ENCODE measurements at regions of chr11 and their contacts with region 1.

Region 1: GRCh38 chr11:47248664-47249377 is at the start of gene ACP2:
- DNase-seq: peak; percentile 93 to 95
- ATAC-seq: peak; percentile 95
- H3K4me3 ChIP-seq: peak within 1 kb of the TSS; percentile 51 to 73
- H3K27ac ChIP-seq: peak within 1 kb of the TSS in 1 of 2 donors; percentile 60
- H3K4me1 ChIP-seq: no peaks in the 10 kb centered on the region
- H3K27me3 ChIP-seq: no peaks in the 10 kb centered on the region
- total RNA-seq, gene ACP2: 20.6 to 27.8 TPM

Region 2: DNA sequence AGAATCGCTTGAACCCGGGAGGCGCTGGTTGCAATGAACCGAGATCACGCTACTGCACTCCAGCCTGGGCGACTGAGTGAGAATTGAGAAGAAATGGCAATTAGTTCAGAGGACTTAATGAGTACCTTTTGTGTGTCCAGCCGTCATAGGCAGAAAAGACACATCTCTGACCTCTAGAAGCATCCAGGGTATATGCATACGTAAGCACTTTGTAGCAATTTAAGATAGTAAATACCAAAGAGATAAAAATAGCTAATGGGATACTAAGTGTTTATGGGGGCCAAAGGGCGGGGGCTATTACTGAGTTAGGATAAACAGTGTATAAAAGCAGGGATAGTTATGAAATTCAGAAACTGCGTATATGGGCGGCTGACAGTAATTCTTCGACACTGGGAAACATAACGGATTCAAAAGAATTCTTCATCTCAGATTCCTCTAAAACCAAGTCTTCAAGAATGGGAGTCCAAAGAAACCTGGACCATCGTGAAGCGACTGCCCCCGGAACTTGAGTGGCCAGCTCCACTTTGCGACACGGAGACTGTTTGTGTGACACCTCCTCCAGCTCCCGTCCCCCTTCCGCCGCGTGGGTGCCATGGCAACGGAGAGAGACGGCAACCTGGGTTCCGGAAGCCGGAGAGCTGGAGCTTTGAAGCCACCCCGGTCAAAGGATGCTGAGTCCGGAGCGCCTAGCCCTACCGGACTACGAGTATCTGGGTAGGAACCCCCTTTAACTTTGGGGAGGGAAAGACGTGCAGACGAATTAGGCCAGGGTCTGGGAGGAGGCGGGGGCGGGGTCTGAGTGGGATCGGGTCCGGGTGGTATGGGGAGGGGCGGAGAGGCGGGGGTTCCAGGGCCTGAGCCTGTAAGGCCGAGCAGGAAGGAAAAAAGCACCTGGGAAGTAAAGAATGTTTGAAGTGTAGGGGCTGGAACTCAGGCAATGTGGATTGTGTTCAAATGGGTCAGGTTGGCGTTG is 312.4 kb before region 1 on chr11 and contains the start of gene CSTPP1:
- intact Hi-C with region 1: loop called in 1 of 2 experiments (anchors 1 kb)
- DNase-seq: peak; percentile 97 to 98
- ATAC-seq: peak; percentile 95
- H3K4me3 ChIP-seq: peak within 1 kb of the TSS; percentile 90 to 96
- H3K27ac ChIP-seq: no peak within 1 kb of the TSS
- H3K4me1 ChIP-seq: peaks cover 4% of the 10 kb centered on the region in 2 donors
- H3K27me3 ChIP-seq: peaks cover 0 to 1% of the 10 kb centered on the region in 2 donors
- total RNA-seq, gene CSTPP1: 19.1 to 22.7 TPM

Region 3: GRCh38 chr11:47071791-47072261 is 177.0 kb before region 1 on chr11:
- intact Hi-C with region 1: no loop called
- DNase-seq: no peak
- ATAC-seq: no peak
- H3K4me3 ChIP-seq: no peak overlapping the region
- H3K27ac ChIP-seq: no peak overlapping the region
- H3K4me1 ChIP-seq: no peaks in the 10 kb centered on the region
- H3K27me3 ChIP-seq: no peaks in the 10 kb centered on the region

Region 4: GRCh38 chr11:47269002-47269828 is 20.4 kb after region 1 on chr11:
- intact Hi-C with region 1: loop called in 1 of 2 experiments (anchors 2 kb)
- DNase-seq: peak; percentile 93 to 95
- ATAC-seq: peak; percentile 96
- H3K4me3 ChIP-seq: peak overlapping the region; percentile 72 to 93
- H3K27ac ChIP-seq: peak overlapping the region; percentile 2 to 92
- H3K4me1 ChIP-seq: no peaks in the 10 kb centered on the region
- H3K27me3 ChIP-seq: no peaks in the 10 kb centered on the region